ENCODE measurements at regions of chr1 and their contacts with region 1.

Region 1: DNA sequence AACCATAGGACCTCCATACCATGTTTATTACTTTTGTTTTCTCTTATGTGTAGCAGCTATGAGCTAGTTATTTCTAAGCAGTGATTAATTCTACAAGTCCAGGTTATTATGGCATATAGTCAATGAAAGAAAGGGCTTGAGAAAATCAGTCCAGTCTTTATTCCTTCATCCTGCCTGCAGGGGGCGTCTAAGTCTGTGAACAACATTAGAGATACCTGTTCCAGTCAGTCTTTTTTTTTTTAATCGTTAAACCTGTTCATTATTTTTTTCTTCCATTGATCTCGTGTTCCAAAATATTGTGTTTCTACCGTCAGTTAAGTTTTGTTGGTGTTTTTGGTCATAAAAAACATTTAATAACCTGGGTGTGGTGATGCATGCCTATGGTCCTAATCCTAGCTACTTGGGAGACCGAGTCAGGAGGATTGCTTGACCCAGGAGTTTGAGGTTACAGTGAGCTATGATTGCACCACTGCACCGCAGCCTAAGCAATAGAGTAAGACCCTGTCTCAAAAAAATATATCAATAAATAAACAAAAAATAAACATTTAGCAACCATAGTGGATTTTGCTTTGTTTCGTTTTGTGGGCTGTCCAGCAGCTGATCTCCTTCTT is 29.4 kb upstream of the CD2 start:
- DNase-seq: peak; percentile 52
- H3K4me3 ChIP-seq: no peak overlapping the region
- H3K27ac ChIP-seq: no peak overlapping the region
- H3K4me1 ChIP-seq: peaks cover 39% of the 10 kb centered on the region
- H3K27me3 ChIP-seq: no peaks in the 10 kb centered on the region
- CTCF ChIP-seq: peak; percentile 68 to 89

Region 2: DNA sequence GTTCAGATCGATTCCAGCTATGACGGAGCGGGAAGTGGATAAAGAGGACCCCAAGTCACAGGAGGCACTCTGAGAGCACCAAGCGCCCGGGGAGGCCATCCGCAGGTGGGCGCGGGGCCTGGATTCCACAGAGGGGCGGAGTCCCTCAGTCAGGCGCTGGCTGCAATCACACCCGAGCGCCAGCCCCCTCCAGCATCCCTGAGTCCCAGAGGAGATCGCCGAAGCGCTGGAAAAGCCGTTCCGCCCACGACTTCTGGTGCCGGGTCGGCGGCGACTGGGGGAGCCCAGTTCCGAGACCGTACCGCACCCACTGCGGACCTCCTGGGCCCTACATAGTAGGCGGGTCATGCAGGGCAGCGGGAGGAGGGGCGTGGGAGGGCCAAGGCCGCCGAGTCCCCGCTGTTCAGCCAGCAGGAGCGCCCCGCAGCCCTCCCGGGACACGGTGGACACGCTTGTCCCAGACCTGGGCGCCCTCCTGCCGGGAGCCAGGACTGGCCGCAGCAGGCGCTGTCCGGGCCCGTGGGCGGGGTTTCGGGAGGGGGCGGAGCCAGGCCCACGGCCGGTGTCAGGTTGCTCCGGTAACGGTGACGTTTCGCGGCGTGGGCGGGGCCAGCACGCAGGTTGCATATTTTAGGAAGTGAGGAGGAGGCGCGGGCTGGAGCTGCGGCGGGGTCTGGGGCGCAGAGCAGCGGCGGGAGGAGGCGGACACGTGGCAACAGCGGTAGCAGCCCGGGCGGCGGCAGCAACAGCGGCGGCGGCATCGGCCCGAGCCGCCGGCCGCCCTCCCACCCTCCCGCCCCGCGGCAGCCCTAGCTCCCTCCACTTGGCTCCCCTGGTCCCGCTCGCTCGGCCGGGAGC is 352.1 kb before region 1 on chr1 and contains the start of gene ATP1A1:
- CTCF ChIA-PET with region 1: no interaction called
- dilution Hi-C with region 1: no loop called
- in situ Hi-C with region 1: no loop called
- intact Hi-C with region 1: no loop called
- DNase-seq: peak; percentile 91
- H3K4me3 ChIP-seq: peak within 1 kb of the TSS; percentile 62 to 91 (median 82)
- H3K27ac ChIP-seq: peak within 1 kb of the TSS; percentile 95
- H3K4me1 ChIP-seq: peaks cover 36% of the 10 kb centered on the region
- H3K27me3 ChIP-seq: no peaks in the 10 kb centered on the region
- CTCF ChIP-seq: peak in 1 of 2 donors; percentile 28
- total RNA-seq, gene ATP1A1: 359 to 505 TPM

Region 3: GRCh38 chr1:116567790-116568661 is 156.8 kb before region 1 on chr1:
- CTCF ChIA-PET with region 1: no interaction called
- dilution Hi-C with region 1: no loop called
- in situ Hi-C with region 1: no loop called
- intact Hi-C with region 1: no loop called
- DNase-seq: no peak
- H3K4me3 ChIP-seq: no peak overlapping the region
- H3K27ac ChIP-seq: no peak overlapping the region
- H3K4me1 ChIP-seq: peaks cover 20% of the 10 kb centered on the region
- H3K27me3 ChIP-seq: no peaks in the 10 kb centered on the region
- CTCF ChIP-seq: no peak

Region 4: DNA sequence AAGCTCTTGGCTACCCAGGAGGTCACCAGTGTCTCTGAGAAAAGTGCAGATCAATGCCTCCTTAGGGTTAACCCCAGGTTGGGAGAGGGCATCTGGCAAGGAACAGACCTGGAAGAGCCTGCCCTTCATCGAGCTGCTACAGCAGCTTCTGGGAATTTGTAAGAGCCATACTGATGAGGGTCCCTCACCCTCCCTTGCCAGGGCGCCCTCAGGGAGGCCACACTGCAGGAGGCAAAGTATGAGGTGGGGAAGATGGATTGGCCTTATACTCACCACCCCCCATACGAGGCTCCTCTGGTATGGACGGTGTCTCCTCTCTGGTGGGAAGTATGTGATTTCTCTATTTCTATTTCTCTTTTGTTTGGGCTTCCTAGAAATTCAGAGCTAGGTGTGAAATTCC is 70.5 kb before region 1 on chr1:
- CTCF ChIA-PET with region 1: no interaction called
- dilution Hi-C with region 1: no loop called
- in situ Hi-C with region 1: no loop called
- intact Hi-C with region 1: loop called (anchors 5 kb)
- DNase-seq: no peak
- H3K4me3 ChIP-seq: no peak overlapping the region
- H3K27ac ChIP-seq: no peak overlapping the region
- H3K4me1 ChIP-seq: peaks cover 5% of the 10 kb centered on the region
- H3K27me3 ChIP-seq: no peaks in the 10 kb centered on the region
- CTCF ChIP-seq: no peak

Region 5: DNA sequence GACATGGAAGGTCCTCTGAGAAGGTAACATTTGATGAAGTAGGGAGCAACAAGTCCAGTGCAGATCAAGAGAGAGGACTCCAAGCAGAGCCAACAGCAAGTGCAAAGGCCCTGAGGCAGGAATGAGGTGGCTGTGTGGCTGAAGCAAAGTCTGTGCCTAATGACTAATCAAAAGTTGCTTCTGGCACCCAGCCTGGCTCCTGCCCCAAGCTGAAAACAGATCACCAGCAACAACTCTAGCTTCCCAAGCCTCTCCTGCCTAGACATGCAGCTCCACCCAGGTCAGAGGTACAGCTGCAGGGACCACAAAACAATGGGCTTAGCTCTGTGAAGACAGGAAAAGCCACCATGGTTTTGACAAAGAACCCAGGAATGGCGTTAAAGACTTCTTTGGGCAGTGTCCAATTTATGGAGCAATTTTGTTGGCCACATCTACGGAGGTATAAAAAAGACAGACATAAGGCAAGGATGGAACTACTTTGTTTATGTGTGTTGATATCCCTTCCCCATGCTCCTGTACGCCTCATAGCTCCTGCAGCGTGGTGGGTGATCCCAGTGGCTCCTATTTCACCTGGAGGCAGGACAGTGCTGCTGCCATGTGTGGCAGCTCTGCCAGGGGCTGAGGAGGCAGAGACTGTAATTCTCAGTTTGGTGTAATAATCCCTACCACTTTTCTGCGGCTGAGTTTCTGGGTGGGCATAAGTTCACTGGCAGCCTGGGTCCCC is 30.9 kb before region 1 on chr1:
- CTCF ChIA-PET with region 1: no interaction called
- dilution Hi-C with region 1: no loop called
- in situ Hi-C with region 1: no loop called
- intact Hi-C with region 1: loop called (anchors 1 kb)
- DNase-seq: peak; percentile 99
- H3K4me3 ChIP-seq: no peak overlapping the region
- H3K27ac ChIP-seq: peak overlapping the region; percentile 66
- H3K4me1 ChIP-seq: peaks cover 47% of the 10 kb centered on the region
- H3K27me3 ChIP-seq: no peaks in the 10 kb centered on the region
- CTCF ChIP-seq: no peak

Region 6: DNA sequence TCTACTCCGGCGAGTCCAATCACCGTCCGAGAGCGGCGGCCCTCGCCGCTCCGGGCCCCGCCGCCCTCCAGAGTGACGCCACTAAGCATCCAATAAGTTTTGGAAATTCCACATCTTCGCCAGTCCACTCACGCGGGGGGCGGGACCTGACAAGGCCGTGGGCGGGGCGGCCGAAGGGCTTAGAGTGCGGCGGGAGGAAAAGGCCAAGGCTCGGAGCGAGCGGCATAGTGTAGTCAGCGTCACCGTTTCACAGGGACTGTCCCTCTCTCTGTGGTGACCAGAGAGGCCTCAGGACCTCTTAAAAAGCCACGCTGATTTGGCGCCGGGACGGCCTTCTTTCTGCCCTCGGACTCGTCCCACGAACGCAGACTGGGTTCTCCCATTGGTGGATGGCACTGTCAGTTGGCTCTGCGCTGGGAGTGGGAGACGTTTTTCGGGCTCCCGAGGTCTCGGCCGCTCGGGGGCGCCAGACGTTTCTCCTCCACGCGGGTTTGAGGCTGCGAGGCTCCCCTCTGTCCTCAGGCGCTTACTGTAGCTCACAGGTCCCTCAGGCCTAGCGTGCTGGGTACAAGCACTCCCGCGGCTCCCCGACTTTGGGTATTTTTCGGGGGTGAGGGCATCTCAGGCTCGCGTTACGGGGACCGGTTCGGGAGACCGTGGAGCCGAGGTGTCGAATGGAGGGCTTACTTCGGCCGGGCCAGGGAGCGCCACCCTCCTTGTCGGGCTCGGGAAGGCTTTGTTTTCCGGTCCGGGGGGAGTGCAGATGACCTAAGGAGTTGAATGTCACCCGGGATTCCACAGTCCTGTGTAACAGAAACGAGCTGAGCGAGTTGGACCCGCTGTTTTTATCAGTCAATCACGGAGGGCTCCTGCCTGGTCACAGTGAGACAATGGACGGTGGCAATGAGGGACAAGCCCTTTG is 397.2 kb after region 1 on chr1:
- CTCF ChIA-PET with region 1: no interaction called
- dilution Hi-C with region 1: no loop called
- in situ Hi-C with region 1: no loop called
- intact Hi-C with region 1: loop called (anchors 10 kb)
- DNase-seq: peak; percentile 97
- H3K4me3 ChIP-seq: peak overlapping the region; percentile 62 to 82 (median 66)
- H3K27ac ChIP-seq: peak overlapping the region; percentile 70
- H3K4me1 ChIP-seq: peaks cover 8% of the 10 kb centered on the region
- H3K27me3 ChIP-seq: no peaks in the 10 kb centered on the region
- CTCF ChIP-seq: peak; percentile 40 to 80